ENCODE measurements at regions of chr10 and their contacts with region 1.

Region 1: DNA sequence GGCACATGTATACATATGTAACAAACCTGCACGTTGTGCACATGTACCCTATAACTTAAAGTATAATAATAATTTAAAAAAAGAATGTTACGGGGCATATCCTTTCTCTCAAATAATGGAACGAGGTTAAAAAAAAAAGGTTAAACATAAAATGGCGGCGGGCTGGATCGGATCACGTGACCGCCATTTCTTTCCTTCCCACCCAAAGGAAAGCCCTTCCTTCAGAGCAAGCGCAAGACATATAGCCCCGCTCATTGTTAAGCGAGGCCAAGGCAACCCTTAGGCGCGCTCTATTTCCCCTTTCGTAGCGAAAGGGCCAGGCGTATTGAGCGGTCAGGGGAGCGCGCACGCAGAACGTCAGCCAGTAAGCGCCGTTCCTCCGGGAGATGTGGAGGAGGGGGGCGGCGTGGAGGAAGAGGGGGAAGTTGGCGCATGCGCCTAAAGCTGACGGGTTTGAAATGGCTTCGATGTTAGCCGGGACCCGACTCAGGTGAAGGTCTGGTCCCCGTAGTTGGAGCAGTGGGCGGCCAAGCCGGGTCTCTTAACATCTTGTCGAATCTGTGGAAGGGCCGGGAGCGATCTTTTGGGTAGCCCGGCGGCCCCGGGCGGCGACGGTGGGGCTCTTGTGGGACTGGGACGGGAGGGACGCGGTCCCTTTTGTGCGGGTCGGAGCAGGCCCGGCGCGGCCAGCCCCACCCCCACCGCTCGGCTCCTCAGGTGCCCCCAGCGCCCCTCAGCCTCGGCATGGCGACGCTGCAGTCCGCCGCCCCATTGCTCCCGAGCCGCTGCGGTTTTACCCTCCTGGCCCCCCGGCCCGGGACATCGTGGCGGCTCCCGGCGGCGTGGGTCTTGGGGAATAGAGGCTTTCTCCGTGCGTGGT is at the start of gene CCAR1:
- DNase-seq: peak; percentile 99
- ATAC-seq: peak; percentile 99
- H3K4me3 ChIP-seq: peak within 1 kb of the TSS; percentile 86
- H3K27ac ChIP-seq: peak within 1 kb of the TSS; percentile 65
- H3K4me1 ChIP-seq: 0 out of 2 replicates have a peak, but pooled peaks cover 5% of the 10 kb centered on the region
- H3K27me3 ChIP-seq: no peaks in the 10 kb centered on the region
- CTCF ChIP-seq: no peak
- total RNA-seq, gene CCAR1: 64.9 and 92.1 TPM in 2 replicates

Region 2: DNA sequence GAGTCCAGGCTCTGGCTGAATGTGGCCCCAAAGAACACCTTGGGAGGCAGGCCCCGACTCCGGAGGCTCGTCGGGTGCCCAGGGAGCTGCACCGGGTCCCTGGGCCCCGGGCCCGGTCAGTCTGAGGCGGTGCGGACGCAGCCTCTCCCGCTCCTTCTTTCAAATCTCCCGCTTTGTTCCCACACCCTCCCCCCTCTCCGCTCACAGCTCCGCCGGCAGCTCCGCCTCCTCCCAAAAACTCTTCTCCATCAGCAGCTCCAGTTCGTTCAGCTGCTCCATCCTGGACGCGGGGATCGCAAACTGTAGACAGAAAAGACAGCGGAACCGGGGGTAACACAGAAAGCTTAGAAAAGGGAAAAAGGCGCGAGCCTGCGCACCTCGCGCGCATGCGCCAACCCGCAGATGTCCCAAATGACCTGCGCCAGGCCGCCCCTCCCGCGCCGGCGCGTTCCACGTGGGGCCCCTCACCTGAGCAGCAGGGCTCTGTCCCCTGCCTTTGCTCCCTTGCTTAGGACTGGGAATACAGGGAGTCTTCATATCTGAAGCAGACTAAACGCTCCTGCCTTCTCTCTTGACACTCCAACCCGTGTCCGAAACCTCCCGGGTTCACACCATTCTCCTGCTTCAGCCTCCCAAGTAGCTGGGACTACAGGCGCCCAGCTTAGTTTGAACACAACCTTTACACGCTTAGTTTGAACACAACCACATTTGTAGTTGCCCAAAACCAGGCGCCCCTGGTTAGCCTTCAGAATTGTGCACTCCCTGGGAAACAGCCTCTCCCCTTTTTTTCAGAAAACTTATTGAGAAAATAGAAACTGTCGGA is 249.2 kb before region 1 on chr10 and contains the start of gene DNA2:
- CTCF ChIA-PET with region 1: no interaction called
- POLR2A ChIA-PET with region 1: no interaction called
- intact Hi-C with region 1: loop called (anchors 10 kb)
- DNase-seq: peak; percentile 93
- ATAC-seq: peak; percentile 81
- H3K4me3 ChIP-seq: peak within 1 kb of the TSS; percentile 86
- H3K27ac ChIP-seq: peak within 1 kb of the TSS; percentile 80
- H3K4me1 ChIP-seq: peaks cover 16% of the 10 kb centered on the region
- H3K27me3 ChIP-seq: no peaks in the 10 kb centered on the region
- CTCF ChIP-seq: no peak
- total RNA-seq, gene DNA2: 29.5 and 38.7 TPM in 2 replicates

Region 3: GRCh38 chr10:68550747-68551411 is 170.2 kb before region 1 on chr10:
- CTCF ChIA-PET with region 1: interaction called, 3 read pairs
- POLR2A ChIA-PET with region 1: no interaction called
- intact Hi-C with region 1: loop called (anchors 5 kb)
- DNase-seq: peak; percentile 90
- ATAC-seq: peak; percentile 92
- H3K4me3 ChIP-seq: no peak overlapping the region
- H3K27ac ChIP-seq: no peak overlapping the region
- H3K4me1 ChIP-seq: no peaks in the 10 kb centered on the region; the same call in 1 of the 2 replicates
- H3K27me3 ChIP-seq: no peaks in the 10 kb centered on the region
- CTCF ChIP-seq: peak; percentile 88

Region 4: DNA sequence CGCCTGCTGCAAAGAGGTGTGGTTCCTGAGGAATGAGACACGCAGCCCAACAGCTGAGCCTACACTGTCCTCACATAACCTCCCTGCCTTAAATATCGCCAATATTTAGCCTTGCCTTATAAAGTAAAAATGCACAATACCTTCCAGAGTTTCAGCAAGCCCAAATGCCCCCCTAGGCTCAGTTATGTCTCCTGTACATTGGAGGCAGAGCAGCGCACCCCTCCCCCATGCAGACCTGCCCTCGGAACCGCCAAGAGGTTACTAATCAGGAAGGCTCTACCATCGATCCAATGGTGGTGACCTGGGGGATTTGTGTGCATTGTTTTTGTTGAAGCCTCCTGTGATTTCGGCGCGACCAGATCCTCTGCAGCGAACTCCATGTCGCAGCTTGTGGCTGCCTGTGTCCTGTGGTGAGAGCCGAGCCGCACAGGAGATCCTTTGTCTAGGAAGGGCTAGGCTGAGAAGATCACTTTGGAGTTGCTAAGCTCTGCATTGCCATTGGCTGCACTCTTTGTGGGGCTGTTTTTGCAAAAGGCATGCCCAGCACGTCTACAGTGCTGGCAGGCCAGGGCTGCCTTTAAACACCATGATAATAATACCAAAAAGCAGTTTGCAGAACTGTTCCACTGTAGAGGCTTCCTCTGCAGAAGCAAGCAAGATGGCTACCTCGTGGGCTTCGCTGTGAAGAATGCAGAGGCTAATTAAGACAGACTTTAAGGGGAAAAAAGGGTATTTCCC is 120.8 kb before region 1 on chr10:
- CTCF ChIA-PET with region 1: no interaction called
- POLR2A ChIA-PET with region 1: no interaction called
- intact Hi-C with region 1: loop called (anchors 2 kb)
- DNase-seq: peak; percentile 89
- ATAC-seq: peak; percentile 94
- H3K4me3 ChIP-seq: peak overlapping the region; percentile 67
- H3K27ac ChIP-seq: peak overlapping the region; percentile 65
- H3K4me1 ChIP-seq: peaks cover 42% of the 10 kb centered on the region
- H3K27me3 ChIP-seq: no peaks in the 10 kb centered on the region
- CTCF ChIP-seq: no peak

Region 5: GRCh38 chr10:68666280-68666760 is 54.7 kb before region 1 on chr10:
- CTCF ChIA-PET with region 1: no interaction called
- POLR2A ChIA-PET with region 1: no interaction called
- intact Hi-C with region 1: loop called (anchors 5 kb)
- DNase-seq: peak; percentile 92
- ATAC-seq: peak; percentile 96
- H3K4me3 ChIP-seq: peak overlapping the region; percentile 29; the same call in 1 of the 2 replicates
- H3K27ac ChIP-seq: peak overlapping the region; percentile 80
- H3K4me1 ChIP-seq: peaks cover 21% of the 10 kb centered on the region
- H3K27me3 ChIP-seq: no peaks in the 10 kb centered on the region
- CTCF ChIP-seq: no peak

Region 6: DNA sequence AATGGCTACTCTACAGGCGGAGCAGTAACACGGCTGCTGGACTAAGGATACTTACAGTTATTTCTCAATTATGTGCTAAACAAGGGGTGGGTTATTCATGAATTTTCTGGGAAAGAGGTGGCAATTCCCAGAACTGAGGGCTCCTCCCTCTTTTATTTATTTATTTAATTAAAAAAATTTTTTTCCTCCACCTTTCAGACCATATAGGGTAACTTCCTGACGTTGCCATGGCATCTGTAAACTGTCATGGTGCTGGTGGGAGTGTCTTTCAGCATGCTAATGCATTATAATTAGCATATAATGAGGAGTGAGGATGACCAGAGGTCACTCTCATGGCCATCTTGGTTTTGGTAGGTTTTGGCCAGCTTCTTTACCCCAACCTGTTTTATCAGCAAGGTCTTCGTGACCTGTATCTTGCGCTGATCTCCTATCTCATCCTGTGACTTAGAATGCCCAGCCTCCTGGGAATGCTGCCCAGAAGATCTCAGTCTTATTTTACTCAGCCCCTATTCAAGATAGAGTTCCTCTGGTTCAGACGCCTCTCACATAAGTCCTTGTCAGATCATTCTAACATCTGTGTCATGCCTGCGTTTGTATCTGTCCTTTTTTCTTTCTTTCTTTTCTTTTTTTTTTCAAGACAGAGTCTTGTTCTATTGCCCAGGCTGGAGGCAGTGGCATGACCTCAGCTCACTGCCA is 90.4 kb after region 1 on chr10:
- CTCF ChIA-PET with region 1: no interaction called
- POLR2A ChIA-PET with region 1: no interaction called
- intact Hi-C with region 1: no loop called
- DNase-seq: no peak
- ATAC-seq: no peak
- H3K4me3 ChIP-seq: no peak overlapping the region
- H3K27ac ChIP-seq: no peak overlapping the region
- H3K4me1 ChIP-seq: peaks cover 14% of the 10 kb centered on the region
- H3K27me3 ChIP-seq: no peaks in the 10 kb centered on the region
- CTCF ChIP-seq: no peak

Region 7: DNA sequence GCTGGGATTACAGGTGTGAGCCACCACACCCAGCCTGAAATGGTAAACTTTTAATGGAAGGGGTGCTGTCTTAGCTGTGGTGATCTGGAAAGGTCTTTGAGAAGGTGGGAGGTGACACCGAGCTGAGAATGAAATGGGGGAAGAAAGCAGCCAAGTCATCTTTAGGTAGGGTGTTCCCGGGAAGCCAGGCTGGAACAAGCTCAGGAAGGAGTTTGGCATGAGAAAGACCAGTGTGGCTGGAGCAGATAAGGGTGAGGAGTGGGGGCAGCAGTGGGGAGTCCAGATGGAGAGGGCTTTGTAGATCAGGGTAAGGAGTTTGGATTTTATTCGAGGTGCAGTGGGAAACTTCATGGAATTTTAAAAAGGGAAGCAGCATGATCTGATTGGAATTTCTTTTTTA is 297.6 kb after region 1 on chr10:
- CTCF ChIA-PET with region 1: no interaction called
- POLR2A ChIA-PET with region 1: no interaction called
- intact Hi-C with region 1: no loop called
- DNase-seq: no peak
- ATAC-seq: no peak
- H3K4me3 ChIP-seq: no peak overlapping the region
- H3K27ac ChIP-seq: no peak overlapping the region
- H3K4me1 ChIP-seq: no peaks in the 10 kb centered on the region
- H3K27me3 ChIP-seq: no peaks in the 10 kb centered on the region
- CTCF ChIP-seq: no peak

Region 8: DNA sequence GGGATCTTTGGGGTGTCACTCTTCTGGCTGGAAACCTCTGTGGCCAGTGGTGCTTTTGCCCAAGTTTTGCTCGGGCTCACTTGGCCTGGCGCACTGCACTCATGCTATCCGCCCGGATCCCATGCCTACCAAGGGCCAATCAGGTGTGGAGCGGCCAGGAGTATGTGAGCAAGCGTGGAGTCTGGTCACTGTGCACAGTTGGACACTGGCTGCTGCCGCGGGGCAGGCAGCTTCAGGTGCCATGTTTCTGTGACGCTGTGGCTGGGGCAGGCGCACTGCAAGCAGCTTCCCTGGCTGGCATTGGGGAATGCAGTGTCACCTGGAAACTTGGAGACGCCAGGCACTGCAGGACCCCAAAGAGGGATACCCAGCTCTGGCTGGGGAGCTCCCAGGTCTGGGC is 806.9 kb after region 1 on chr10:
- CTCF ChIA-PET with region 1: no interaction called
- POLR2A ChIA-PET with region 1: no interaction called
- intact Hi-C with region 1: no loop called
- DNase-seq: no peak
- ATAC-seq: no peak
- H3K4me3 ChIP-seq: no peak overlapping the region
- H3K27ac ChIP-seq: no peak overlapping the region
- H3K4me1 ChIP-seq: no peaks in the 10 kb centered on the region
- H3K27me3 ChIP-seq: no peaks in the 10 kb centered on the region
- CTCF ChIP-seq: no peak

Measured in PC-3 (cell line).